ENCODE measurements at regions of chr2 and their contacts with region 1.

Region 1: GRCh38 chr2:25362049-25362433 is 20.3 kb upstream of the DNMT3A start:
- DNase-seq: peak; percentile 96
- ATAC-seq: peak; percentile 78
- H3K4me3 Mint-ChIP-seq: peak overlapping the region; percentile 89
- H3K27ac Mint-ChIP-seq: peak overlapping the region; percentile 98
- H3K4me1 Mint-ChIP-seq: peaks cover 40% of the 10 kb centered on the region
- H3K27me3 Mint-ChIP-seq: no peaks in the 10 kb centered on the region
- CTCF ChIP-seq: peak; percentile 42

Region 2: GRCh38 chr2:24315669-24316068 is 1046.4 kb before region 1 on chr2:
- CTCF ChIA-PET with region 1: no interaction called
- POLR2A ChIA-PET with region 1: no interaction called
- intact Hi-C with region 1: no loop called
- DNase-seq: no peak
- ATAC-seq: peak; percentile 87
- H3K4me3 Mint-ChIP-seq: peak overlapping the region; percentile 50
- H3K27ac Mint-ChIP-seq: peak overlapping the region; percentile 80
- H3K4me1 Mint-ChIP-seq: peaks cover 51% of the 10 kb centered on the region
- H3K27me3 Mint-ChIP-seq: no peaks in the 10 kb centered on the region
- CTCF ChIP-seq: no peak

Region 3: GRCh38 chr2:25165992-25166875 is 195.8 kb before region 1 on chr2:
- CTCF ChIA-PET with region 1: interaction called, 16 read pairs
- POLR2A ChIA-PET with region 1: interaction called, 5 read pairs
- intact Hi-C with region 1: no loop called
- DNase-seq: peak; percentile 71
- ATAC-seq: peak; percentile 95
- H3K4me3 Mint-ChIP-seq: peak overlapping the region; percentile 38
- H3K27ac Mint-ChIP-seq: peak overlapping the region; percentile 65
- H3K4me1 Mint-ChIP-seq: peaks cover 33% of the 10 kb centered on the region
- H3K27me3 Mint-ChIP-seq: peaks cover 23% of the 10 kb centered on the region
- CTCF ChIP-seq: peak; percentile 20

Region 4: GRCh38 chr2:25294573-25295462 is 67.2 kb before region 1 on chr2:
- CTCF ChIA-PET with region 1: interaction called, 3 read pairs
- POLR2A ChIA-PET with region 1: interaction called, 15 read pairs
- intact Hi-C with region 1: no loop called
- DNase-seq: peak; percentile 57
- ATAC-seq: peak; percentile 88
- H3K4me3 Mint-ChIP-seq: peak overlapping the region; percentile 71
- H3K27ac Mint-ChIP-seq: peak overlapping the region; percentile 84
- H3K4me1 Mint-ChIP-seq: peaks cover 48% of the 10 kb centered on the region
- H3K27me3 Mint-ChIP-seq: no peaks in the 10 kb centered on the region
- CTCF ChIP-seq: no peak

Region 5: DNA sequence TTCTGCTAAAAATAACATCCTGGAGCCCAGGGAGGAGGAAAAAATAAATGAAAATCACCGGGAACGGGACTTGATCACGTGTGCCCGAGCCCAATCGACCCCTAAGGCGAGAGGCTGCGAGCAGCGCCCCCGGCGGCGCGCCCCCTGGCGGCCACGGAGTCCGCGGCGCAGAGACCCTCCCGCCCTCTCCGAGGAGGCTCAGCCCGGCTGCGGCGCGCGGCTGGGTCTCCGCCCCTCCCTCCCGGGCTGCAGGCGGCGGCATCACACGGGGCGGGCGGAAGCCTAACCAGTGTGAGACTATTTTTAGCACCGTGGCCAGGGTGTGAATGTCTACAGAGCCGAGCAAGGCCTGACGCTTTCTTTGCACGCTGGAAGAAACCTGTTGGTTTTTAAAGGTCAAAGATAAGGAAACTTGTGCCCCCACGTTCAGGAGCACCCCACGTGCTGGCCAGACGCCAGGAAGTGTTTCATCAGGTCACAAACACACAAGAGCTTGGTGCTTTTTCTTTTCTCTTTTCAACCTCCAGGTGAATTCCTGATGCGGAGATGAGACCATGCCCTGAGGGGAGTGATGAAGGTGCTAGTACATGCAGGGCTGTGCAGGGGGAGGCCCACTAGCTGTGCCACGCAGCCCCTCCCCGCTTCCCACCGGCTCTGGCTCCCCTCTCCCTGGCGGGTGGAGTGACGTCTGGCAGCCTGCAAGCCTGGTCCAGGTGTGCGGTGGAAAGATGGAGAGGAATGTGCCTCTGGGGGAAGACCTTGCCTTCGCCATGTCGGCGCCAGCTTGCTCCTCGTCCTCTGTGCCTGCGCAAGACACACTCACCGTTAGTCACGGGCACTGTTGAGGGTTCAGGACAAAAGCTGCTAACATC is 14.9 kb after region 1 on chr2:
- CTCF ChIA-PET with region 1: interaction called, 56 read pairs
- POLR2A ChIA-PET with region 1: interaction called, 131 read pairs
- intact Hi-C with region 1: loop called (anchors 1 kb)
- DNase-seq: peak; percentile 90
- ATAC-seq: peak; percentile 98
- H3K4me3 Mint-ChIP-seq: peak overlapping the region; percentile 73
- H3K27ac Mint-ChIP-seq: peak overlapping the region; percentile 90
- H3K4me1 Mint-ChIP-seq: peaks cover 35% of the 10 kb centered on the region
- H3K27me3 Mint-ChIP-seq: no peaks in the 10 kb centered on the region
- CTCF ChIP-seq: no peak

Region 6: DNA sequence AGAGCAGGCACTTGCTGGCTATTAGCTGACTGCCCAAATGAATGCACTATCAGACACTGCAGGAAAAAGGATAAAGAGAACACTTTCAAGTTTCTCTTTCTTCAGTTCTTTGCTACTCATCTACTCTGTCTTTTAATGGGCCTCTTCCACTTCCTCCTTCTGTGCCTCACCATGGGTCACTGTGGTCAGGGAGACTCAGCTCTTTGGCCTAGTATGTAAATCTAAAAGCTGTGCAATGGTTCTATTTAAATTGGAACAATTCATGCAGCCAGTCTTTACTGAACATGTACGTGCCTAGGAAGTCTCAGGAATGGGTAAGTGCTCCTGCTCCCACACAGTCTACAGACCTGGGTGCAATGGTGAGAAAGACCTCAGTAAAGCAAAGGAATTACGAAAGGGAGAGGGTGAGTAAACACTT is 58.8 kb after region 1 on chr2:
- CTCF ChIA-PET with region 1: interaction called, 45 read pairs
- POLR2A ChIA-PET with region 1: interaction called, 206 read pairs
- intact Hi-C with region 1: loop called (anchors 1 kb)
- DNase-seq: no peak
- ATAC-seq: peak; percentile 29
- H3K4me3 Mint-ChIP-seq: peak overlapping the region; percentile 93
- H3K27ac Mint-ChIP-seq: peak overlapping the region; percentile 95
- H3K4me1 Mint-ChIP-seq: peaks cover 97% of the 10 kb centered on the region
- H3K27me3 Mint-ChIP-seq: no peaks in the 10 kb centered on the region
- CTCF ChIP-seq: no peak

Region 7: DNA sequence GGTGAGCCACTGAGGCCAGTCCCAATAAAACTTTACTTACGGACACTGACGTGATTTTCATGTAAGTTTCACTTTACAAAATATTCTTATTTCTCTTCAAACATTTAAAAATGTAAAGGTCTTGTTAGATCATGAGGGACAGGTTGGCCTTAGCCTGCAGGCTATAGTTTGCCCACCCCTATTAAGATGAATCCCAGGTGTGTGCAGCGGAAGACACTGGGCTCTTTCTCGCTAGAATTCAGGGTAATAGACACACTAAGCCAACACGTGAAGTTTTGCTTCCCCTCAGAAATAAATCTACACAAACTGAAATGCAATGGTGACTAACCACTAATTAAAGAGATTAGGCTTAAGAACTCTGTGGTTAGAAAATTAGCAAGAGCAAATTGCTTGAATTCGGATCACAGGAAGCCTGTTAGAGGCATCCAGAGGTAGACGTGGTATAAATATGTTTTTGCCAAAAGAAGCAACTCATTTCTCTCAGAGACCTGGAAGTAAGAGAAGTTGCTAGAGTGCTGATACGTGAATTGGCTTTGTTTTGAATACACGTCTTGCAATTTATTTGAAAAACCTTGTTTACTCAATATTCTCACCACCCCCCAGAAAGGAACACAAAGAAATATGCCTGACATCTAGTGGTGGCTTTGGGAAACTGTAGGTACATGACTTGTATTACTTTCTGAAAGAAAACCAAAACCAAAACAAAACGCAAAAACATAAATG is 159.8 kb after region 1 on chr2:
- CTCF ChIA-PET with region 1: interaction called, 10 read pairs
- POLR2A ChIA-PET with region 1: interaction called, 11 read pairs
- intact Hi-C with region 1: loop called (anchors 1 kb)
- DNase-seq: no peak
- ATAC-seq: peak; percentile 97
- H3K4me3 Mint-ChIP-seq: peak overlapping the region; percentile 7
- H3K27ac Mint-ChIP-seq: peak overlapping the region; percentile 38
- H3K4me1 Mint-ChIP-seq: peaks cover 23% of the 10 kb centered on the region
- H3K27me3 Mint-ChIP-seq: no peaks in the 10 kb centered on the region
- CTCF ChIP-seq: no peak

Region 8: DNA sequence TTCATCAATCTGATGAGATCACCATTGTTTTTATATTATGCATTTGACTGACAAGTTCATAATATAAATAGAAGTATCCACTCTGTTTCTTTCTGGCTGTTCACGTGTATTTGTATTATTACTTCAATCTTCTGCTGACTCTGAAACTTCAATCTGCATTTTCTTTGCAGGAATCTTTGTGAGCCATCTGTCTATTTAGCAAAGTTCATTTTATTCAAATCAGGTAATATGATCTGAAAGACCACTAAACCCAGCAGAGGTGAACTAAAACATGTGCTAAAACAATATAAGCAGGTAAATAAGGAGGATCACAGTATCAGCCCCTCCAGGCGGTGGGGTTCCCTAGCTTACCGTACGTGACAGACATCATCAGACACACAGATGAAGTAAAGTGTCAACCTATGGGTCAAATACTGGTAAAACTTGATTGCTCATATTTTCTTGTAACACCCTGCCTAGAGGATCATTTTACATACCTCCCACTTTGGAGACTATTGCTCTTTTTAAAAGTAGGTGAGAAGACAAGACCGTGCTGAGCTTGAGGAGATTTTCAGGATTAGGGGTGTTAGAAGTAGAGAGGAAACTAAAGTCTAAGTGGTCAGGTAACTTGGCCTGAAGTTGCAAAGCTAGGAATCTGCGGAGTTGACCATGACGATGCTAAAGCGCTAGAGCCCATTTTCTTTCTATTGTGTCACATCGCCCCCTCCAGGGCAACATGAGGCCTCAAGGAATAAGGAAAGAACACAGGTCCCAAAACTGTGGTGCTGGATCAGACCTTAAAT is 302.3 kb after region 1 on chr2:
- CTCF ChIA-PET with region 1: interaction called, 3 read pairs
- POLR2A ChIA-PET with region 1: no interaction called
- intact Hi-C with region 1: loop called (anchors 1 kb)
- DNase-seq: no peak
- ATAC-seq: peak; percentile 42
- H3K4me3 Mint-ChIP-seq: peak overlapping the region; percentile 20
- H3K27ac Mint-ChIP-seq: no peak overlapping the region
- H3K4me1 Mint-ChIP-seq: peaks cover 7% of the 10 kb centered on the region
- H3K27me3 Mint-ChIP-seq: no peaks in the 10 kb centered on the region
- CTCF ChIP-seq: no peak

Measured in activated B cell treated with CpG ODN at 0.5 μM for 24 hours (primary cell).